ENCODE measurements at regions of chr16 and their contacts with region 1.

Region 1: GRCh38 chr16:56866943-56867830 is 2.2 kb downstream of the SLC12A3 start:
- DNase-seq: peak; percentile 57
- H3K4me3 ChIP-seq: no peak overlapping the region
- H3K27ac ChIP-seq: no peak overlapping the region
- H3K4me1 ChIP-seq: no peaks in the 10 kb centered on the region
- H3K27me3 ChIP-seq: no peaks in the 10 kb centered on the region
- CTCF ChIP-seq: peak; percentile 55 to 56
- POLR2A ChIP-seq: no peak

Region 2: GRCh38 chr16:56795011-56795410 is 72.2 kb before region 1 on chr16:
- CTCF ChIA-PET with region 1: interaction called, 47 read pairs
- POLR2A ChIA-PET with region 1: no interaction called
- dilution Hi-C with region 1: no loop called
- intact Hi-C with region 1: loop called (anchors 1 kb)
- DNase-seq: peak; percentile 30
- H3K4me3 ChIP-seq: no peak overlapping the region
- H3K27ac ChIP-seq: peak overlapping the region; percentile 36
- H3K4me1 ChIP-seq: peaks cover 4% of the 10 kb centered on the region
- H3K27me3 ChIP-seq: no peaks in the 10 kb centered on the region
- CTCF ChIP-seq: no peak
- POLR2A ChIP-seq: no peak

Region 3: DNA sequence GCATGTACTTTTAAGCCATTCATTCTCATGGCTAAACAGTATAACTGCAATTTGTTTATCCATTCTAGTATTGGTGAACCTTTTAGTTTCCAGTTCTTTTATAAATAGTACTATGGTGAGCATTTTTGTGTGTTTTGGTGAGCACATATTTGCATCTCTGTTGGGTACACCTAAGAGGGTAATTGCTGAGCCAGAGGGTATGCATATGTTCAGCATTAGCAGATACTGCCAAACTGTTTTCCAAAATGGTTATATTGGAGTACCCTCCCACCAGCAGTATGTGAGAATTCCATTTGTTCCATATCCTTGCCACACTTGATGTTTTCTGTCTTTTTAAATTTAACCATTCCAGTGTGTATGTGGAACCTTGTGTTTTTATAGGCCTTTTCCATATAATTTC is 56.2 kb before region 1 on chr16:
- CTCF ChIA-PET with region 1: no interaction called
- POLR2A ChIA-PET with region 1: no interaction called
- dilution Hi-C with region 1: no loop called
- intact Hi-C with region 1: no loop called
- DNase-seq: no peak
- H3K4me3 ChIP-seq: no peak overlapping the region
- H3K27ac ChIP-seq: no peak overlapping the region
- H3K4me1 ChIP-seq: peaks cover 41% of the 10 kb centered on the region
- H3K27me3 ChIP-seq: no peaks in the 10 kb centered on the region
- CTCF ChIP-seq: no peak
- POLR2A ChIP-seq: no peak

Region 4: DNA sequence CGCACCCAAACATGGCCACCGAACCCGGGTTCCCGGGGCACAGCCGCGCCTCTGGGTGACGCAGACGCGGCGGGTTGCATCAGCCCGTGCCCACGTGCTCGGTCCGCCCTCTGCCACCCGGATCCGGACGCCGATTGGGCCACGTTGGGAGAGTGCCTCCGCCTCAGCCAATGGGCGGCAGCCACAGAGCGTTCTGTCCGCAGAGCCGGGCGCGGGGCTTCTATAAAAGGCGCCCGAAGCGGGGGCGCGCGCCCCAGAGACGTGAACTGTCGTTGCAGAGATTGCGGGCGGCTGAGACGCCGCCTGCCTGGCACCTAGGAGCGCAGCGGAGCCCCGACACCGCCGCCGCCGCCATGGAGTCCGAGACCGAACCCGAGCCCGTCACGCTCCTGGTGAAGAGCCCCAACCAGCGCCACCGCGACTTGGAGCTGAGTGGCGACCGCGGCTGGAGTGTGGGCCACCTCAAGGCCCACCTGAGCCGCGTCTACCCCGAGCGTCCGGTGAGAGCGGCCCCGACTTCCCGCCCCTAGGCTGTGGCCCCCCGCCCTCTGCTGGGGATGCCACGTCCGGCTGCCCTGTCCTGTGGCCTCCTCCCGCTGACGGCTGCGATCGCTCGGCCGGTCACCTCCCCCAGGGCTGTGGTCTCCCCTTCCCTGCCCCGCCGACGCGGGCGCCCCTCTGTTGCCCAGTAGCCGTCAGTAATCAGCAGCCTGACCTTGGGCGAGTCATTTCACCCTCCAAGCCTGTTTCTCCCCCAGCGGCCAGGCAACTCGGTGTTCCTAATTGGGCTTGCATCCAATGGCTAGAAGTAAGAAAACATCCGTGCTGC is 64.9 kb after region 1 on chr16 and contains the start of gene HERPUD1:
- CTCF ChIA-PET with region 1: interaction called, 8 read pairs
- POLR2A ChIA-PET with region 1: no interaction called
- dilution Hi-C with region 1: no loop called
- intact Hi-C with region 1: loop called (anchors 1 kb)
- DNase-seq: peak; percentile 98
- H3K4me3 ChIP-seq: peak within 1 kb of the TSS; percentile 66 to 94 (median 85)
- H3K27ac ChIP-seq: peak within 1 kb of the TSS; percentile 80
- H3K4me1 ChIP-seq: peaks cover 26% of the 10 kb centered on the region
- H3K27me3 ChIP-seq: no peaks in the 10 kb centered on the region
- CTCF ChIP-seq: no peak
- POLR2A ChIP-seq: peak; percentile 99
- total RNA-seq, gene HERPUD1: 101 and 109 TPM in 2 replicates

Region 5: DNA sequence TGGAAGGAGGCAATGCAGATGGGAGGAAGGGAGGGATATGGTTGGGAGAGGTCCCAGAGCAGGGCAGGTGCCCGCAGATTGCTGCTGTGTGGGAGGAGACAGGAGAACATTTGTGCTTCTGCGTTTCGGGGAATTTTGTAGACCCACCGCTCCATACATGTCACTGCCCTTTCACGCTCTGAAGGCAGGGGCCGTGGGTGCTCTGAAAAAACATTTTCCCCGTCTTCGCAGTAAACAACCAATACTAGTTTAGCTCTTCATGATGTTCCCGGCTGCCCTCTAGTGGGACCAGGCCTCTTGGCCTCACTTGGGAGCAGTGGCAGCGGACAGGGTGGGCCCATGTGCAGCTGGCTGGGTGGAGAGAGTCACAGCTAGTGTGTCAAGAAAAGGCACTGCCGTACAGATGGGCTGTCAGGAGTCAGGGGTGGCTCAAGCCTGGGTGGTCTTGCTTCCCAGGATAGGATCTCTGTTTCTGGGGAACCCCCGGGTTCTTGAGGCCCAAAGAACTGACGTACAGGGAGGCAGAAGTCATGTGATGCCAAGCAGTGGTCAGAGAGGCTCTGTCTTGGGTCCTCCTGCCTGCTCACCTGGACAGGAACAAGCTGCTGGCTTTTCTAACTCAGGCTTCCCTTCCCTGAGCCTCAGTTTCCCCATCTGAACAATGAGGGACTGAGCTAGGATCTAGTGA is 178.7 kb after region 1 on chr16:
- CTCF ChIA-PET with region 1: interaction called, 6 read pairs
- POLR2A ChIA-PET with region 1: no interaction called
- dilution Hi-C with region 1: no loop called
- intact Hi-C with region 1: loop called (anchors 5 kb)
- DNase-seq: peak; percentile 75
- H3K4me3 ChIP-seq: no peak overlapping the region
- H3K27ac ChIP-seq: no peak overlapping the region
- H3K4me1 ChIP-seq: no peaks in the 10 kb centered on the region
- H3K27me3 ChIP-seq: no peaks in the 10 kb centered on the region
- CTCF ChIP-seq: peak; percentile 72 to 80
- POLR2A ChIP-seq: no peak

Region 6: GRCh38 chr16:57335366-57335765 is 468.2 kb after region 1 on chr16:
- CTCF ChIA-PET with region 1: no interaction called
- POLR2A ChIA-PET with region 1: no interaction called
- dilution Hi-C with region 1: no loop called
- intact Hi-C with region 1: no loop called
- DNase-seq: peak; percentile 74
- H3K4me3 ChIP-seq: no peak overlapping the region
- H3K27ac ChIP-seq: peak overlapping the region; percentile 59
- H3K4me1 ChIP-seq: peaks cover 10% of the 10 kb centered on the region
- H3K27me3 ChIP-seq: peaks cover 2% of the 10 kb centered on the region in 2 experiments
- CTCF ChIP-seq: no peak
- POLR2A ChIP-seq: no peak